ENCODE measurements at regions of chr6 and their contacts with region 1.

Region 1: DNA sequence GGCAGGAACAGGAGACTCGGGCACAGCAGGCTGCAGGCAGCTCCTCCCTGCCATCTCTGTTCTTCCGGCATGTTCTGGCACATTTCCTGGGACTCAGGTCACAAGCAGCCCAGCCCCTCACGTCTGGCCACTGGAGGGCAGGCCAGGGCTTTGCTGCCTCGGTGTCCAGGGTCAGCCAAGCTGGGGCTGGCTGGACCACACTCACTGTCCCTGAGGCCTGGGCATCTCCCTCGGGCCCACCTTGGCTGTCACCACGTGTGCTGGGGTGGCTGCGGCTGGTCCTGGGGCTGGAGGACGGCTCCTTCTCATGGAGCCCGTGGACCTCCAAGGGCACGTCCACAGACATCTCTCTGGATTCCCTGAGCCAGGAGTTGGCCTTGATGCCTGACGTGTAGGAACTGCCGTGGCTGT is 18.5 kb downstream of the FRMD1 start:
- DNase-seq: peak; percentile 73 to 89 (median 82)
- ATAC-seq: peak; percentile 89 to 98 (median 92)
- H3K4me3 ChIP-seq: no peak overlapping the region
- H3K27ac ChIP-seq: no peak overlapping the region
- H3K4me1 ChIP-seq: no peaks in the 10 kb centered on the region
- H3K27me3 ChIP-seq: no peaks in the 10 kb centered on the region
- CTCF ChIP-seq: peak in 3 of 4 donors; percentile 47 to 65 (median 53)

Region 2: DNA sequence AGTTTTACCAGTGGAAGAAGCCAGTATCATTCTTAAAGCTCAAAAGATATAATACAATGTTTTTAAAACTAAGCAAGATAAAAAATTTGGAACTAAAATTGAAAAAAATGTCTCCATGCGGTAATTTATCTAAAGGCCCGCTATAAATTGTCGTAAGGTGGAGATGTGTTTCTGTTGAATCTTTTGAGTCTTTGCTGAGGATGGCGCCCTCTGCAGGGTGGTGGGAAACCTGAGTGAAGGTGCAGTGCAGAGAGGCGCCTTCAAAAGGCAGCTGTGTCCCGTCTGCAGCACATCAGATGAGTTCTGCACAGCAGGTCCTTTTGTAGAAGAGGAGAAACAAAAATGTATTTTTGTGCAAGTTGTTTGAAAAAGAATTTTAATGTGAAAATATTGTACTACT is 92.4 kb before region 1 on chr6:
- intact Hi-C with region 1: no loop called
- DNase-seq: no peak
- ATAC-seq: no peak
- H3K4me3 ChIP-seq: no peak overlapping the region
- H3K27ac ChIP-seq: no peak overlapping the region
- H3K4me1 ChIP-seq: peaks cover 14 to 25% (median 22%) of the 10 kb centered on the region in 3 donors
- H3K27me3 ChIP-seq: no peaks in the 10 kb centered on the region
- CTCF ChIP-seq: no peak

Region 3: DNA sequence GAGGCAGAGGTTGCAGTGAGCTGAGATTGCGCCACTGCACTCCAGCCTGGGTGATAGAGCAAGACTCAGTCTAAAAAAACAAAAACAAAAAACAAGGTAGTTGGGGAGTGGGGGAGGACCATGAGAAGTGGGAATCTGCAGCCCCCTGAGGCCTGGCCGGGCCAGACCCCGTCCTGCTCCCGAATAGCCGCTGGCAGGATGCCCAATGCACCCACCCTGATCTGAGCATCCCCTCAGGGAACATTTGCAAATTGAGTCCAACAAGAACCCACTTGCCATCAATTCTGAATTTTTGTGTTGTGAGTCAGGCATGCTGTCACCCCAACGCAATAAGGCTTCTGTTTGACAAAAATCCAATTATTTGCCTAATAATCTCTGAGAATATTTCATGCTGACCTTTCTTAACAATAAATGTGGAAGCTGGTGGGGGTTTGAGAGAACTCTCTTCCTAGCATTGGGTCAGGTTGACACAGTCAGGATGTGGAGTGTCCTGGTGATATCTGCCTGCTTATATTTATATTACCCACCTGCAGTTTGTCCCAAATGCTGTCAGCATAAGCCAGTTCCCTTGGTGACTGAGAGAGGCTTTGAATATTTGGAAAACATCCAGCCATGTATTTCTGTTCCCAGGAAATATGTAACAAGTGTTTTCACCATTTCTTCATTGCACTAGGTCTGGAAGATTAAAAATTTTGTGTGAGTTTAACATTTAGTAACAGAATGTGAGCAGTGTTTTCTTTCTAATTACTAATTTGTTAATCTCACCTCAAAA is 46.9 kb after region 1 on chr6:
- intact Hi-C with region 1: no loop called
- DNase-seq: peak in 2 of 6 donors; percentile 47 to 58
- ATAC-seq: peak; percentile 48 to 74 (median 62)
- H3K4me3 ChIP-seq: no peak overlapping the region
- H3K27ac ChIP-seq: no peak overlapping the region
- H3K4me1 ChIP-seq: peaks cover 1 to 9% (median 5%) of the 10 kb centered on the region in 3 donors
- H3K27me3 ChIP-seq: no peaks in the 10 kb centered on the region
- CTCF ChIP-seq: no peak

Region 4: DNA sequence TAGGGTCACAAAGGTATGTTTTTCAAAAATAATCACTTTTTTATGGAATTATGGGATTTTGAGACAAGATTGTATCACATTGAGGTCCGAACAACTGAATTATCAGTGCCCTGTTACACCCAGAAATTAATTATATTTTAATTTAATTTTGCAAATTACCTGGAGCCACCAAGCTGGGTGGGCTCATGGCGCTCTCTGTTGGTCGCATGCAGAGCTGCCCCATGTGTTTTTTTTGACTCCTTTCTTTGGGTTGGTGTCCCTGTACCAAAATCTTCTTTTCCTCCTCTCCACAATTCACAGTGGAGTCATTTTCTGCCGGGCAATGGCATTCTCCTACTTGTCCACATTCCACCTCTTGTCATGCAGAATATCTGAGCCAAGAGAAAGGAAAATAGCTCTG is 57.4 kb after region 1 on chr6:
- intact Hi-C with region 1: loop called in 1 of 3 experiments (anchors 5 kb)
- DNase-seq: peak in 1 of 6 donors; percentile 4
- ATAC-seq: peak in 1 of 4 donors; percentile 54
- H3K4me3 ChIP-seq: no peak overlapping the region
- H3K27ac ChIP-seq: no peak overlapping the region
- H3K4me1 ChIP-seq: no peaks in the 10 kb centered on the region
- H3K27me3 ChIP-seq: no peaks in the 10 kb centered on the region
- CTCF ChIP-seq: peak in 1 of 4 donors; percentile 18

Measured in pancreas (tissue), 10 donors.